ENCODE measurements at regions of chr2 and their contacts with region 1.

Region 1: DNA sequence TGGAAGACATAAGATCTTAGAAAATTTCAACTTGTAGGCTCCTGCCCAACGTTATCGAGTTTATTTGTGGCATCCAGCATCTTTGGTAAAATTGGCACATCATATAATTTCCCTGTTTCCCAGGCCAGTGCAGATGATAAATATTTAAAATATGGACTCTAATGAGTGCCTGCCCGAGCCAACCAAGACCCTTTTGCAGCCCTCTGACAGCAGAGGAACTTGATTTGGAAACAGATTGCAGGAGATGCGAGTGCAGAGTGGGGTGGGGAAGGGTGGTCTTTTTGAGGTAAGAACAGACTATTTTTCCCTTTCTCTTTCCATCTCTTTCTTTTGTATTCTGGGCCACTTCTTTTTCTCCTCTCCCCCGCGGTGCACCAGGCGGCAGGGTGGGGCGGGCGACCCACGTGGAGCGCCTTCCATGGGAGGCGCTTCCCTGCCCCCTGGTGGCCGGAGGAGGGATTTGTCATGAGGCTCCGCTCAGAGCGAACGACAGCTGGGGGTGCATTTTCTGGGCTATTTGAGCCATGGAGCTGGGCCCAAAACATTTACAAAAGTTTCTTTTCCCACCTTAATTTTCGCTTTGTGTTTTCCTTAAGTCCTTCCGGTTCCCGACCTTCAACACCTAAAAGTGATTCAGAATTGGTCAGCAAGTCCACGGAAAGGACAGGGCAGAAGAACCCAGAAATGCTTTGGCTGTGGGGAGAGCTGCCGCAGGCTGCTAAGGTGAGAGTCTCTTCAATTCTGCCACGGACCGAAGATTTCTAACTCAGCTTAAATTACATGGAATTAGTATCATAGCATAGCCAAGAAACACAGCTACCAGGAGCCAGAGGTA is 32.7 kb downstream of the LPIN1 start:
- H3K4me3 Mint-ChIP-seq: peak overlapping the region; percentile 48
- H3K27ac Mint-ChIP-seq: no peak overlapping the region
- H3K4me1 Mint-ChIP-seq: peaks cover 17% of the 10 kb centered on the region
- H3K27me3 Mint-ChIP-seq: no peaks in the 10 kb centered on the region

Region 2: DNA sequence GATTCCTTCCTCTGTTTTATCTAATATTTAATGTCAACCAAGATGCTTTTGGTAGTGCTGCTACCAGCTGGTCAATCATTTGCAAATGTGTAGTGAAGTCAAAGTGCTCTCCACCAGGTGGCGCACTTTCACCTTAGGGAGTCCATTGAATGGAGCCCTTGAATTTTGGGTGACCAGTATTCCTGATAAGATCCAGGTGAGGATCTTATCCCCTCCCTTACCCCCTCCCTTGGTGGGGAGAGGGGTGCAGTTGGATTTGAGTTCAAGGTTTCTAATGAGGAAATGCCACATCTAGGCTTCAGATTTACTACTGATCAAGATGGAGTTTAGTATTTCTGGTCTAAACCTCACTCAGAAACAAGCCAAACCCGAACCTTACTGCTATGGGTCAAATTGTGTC is 301.1 kb before region 1 on chr2:
- intact Hi-C with region 1: loop called (anchors 5 kb)
- H3K4me3 Mint-ChIP-seq: no peak overlapping the region
- H3K27ac Mint-ChIP-seq: no peak overlapping the region
- H3K4me1 Mint-ChIP-seq: peaks cover 9% of the 10 kb centered on the region
- H3K27me3 Mint-ChIP-seq: peaks cover 51% of the 10 kb centered on the region

Region 3: GRCh38 chr2:11688222-11689069 is 90.7 kb before region 1 on chr2:
- intact Hi-C with region 1: loop called (anchors 1 kb)
- H3K4me3 Mint-ChIP-seq: peak overlapping the region; percentile 72
- H3K27ac Mint-ChIP-seq: peak overlapping the region; percentile 88
- H3K4me1 Mint-ChIP-seq: peaks cover 51% of the 10 kb centered on the region
- H3K27me3 Mint-ChIP-seq: peaks cover 26% of the 10 kb centered on the region

Region 4: GRCh38 chr2:11738589-11739436 is 40.3 kb before region 1 on chr2:
- intact Hi-C with region 1: loop called (anchors 1 kb)
- H3K4me3 Mint-ChIP-seq: no peak overlapping the region
- H3K27ac Mint-ChIP-seq: no peak overlapping the region
- H3K4me1 Mint-ChIP-seq: peaks cover 27% of the 10 kb centered on the region
- H3K27me3 Mint-ChIP-seq: peaks cover 12% of the 10 kb centered on the region